Endothelial cell of umbilical vein (primary cell): ENCODE measurements at regions of chr3 and their contacts with region 1.

Region 1: GRCh38 chr3:185942907-185943759 is 5.3 kb upstream of the TRA2B start:
- DNase-seq: peak; percentile 66
- H3K4me3 ChIP-seq: no peak overlapping the region
- H3K27ac ChIP-seq: no peak overlapping the region
- H3K4me1 ChIP-seq: no peaks in the 10 kb centered on the region
- H3K27me3 ChIP-seq: peaks cover 6 to 13% of the 10 kb centered on the region in 2 experiments
- CTCF ChIP-seq: peak; percentile 97 to 99
- POLR2A ChIP-seq: no peak

Region 2: GRCh38 chr3:185585859-185586685 is 357.1 kb before region 1 on chr3 and contains the start of gene SENP2:
- CTCF ChIA-PET with region 1: interaction called, 11 read pairs
- POLR2A ChIA-PET with region 1: interaction called, 3 read pairs
- dilution Hi-C with region 1: no loop called
- intact Hi-C with region 1: no loop called
- DNase-seq: peak; percentile 100
- H3K4me3 ChIP-seq: peak within 1 kb of the TSS; percentile 36 to 93 (median 63)
- H3K27ac ChIP-seq: peak within 1 kb of the TSS; percentile 72
- H3K4me1 ChIP-seq: peaks cover 7% of the 10 kb centered on the region
- H3K27me3 ChIP-seq: peaks cover 0 to under 1% of the 10 kb centered on the region in 2 experiments
- CTCF ChIP-seq: no peak
- POLR2A ChIP-seq: peak; percentile 90
- total RNA-seq, gene SENP2: 38.9 and 40.4 TPM in 2 replicates

Region 3: DNA sequence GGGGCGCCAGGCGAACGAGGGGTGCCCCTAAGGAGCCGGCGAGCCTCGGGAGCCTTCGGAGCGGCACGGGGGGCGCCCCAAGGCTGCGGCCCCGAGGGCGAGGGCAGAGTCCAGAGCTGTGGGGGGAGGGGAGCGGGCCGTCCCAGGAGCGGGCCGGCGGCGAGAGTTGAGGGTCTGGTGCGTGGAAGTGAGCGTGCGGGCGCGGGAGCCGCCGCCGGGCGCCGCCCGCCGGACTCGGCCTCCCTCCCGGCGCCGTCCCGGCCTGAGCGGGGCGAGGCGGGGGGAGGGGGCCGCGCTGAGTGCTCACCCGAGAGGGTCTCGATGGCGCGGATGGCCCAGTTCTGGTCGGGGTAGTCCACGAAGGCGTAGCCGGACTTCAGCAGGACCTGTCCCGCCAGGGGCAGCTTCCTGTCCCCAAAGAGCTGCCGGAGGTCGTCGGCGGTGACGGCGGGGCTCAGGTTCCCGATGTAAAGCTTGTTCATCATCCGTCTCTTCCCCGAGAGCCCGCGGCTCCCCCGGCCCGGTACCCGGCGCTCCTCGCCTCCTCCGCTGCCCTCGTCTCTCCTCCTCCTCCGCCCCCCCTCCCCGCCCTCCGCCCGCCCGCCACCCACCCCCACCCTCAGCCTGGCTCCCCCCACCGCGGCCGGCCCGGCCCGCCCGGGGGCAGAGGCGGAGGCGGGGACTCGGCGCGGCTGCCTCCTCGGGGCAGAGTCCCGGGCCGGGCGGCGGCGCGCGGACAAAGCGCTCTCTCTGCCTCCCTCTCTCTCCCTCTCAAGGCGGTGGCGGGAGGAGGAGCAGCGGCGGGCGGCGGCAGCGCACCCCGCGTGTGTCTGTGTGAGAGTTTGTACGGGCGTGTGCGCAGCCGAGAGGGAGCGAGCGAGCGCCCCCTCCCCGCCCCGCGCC is 118.4 kb before region 1 on chr3 and contains the start of gene IGF2BP2:
- CTCF ChIA-PET with region 1: interaction called, 11 read pairs
- POLR2A ChIA-PET with region 1: interaction called, 6 read pairs
- dilution Hi-C with region 1: no loop called
- intact Hi-C with region 1: no loop called
- DNase-seq: peak; percentile 84
- H3K4me3 ChIP-seq: peak within 1 kb of the TSS; percentile 87 to 100 (median 98)
- H3K27ac ChIP-seq: peak within 1 kb of the TSS; percentile 84
- H3K4me1 ChIP-seq: peaks cover 32% of the 10 kb centered on the region
- H3K27me3 ChIP-seq: no peaks in the 10 kb centered on the region
- CTCF ChIP-seq: peak in 1 of 2 donors; percentile 11
- POLR2A ChIP-seq: peak; percentile 69
- total RNA-seq, gene IGF2BP2: 122 and 130 TPM in 2 replicates

Region 4: DNA sequence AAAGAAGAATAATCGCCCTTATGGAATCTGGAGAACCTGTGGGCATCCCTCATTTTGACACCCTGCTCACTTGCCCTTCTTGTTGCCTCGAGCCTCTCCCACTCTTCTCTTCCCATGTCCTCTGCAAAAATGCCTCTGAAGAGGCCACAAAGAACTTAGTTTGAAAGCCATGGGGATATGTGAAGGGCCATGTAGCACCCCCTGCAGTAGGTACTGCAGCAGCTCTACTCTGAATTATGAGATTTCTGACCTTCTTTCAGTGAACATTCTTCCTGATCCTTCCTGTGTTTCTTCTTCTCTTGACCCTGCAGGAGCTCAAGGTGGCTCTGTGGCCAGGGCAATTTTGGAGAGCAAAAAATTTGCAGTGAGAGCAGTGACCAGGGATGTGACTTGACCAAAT is 25.0 kb after region 1 on chr3:
- CTCF ChIA-PET with region 1: interaction called, 144 read pairs
- POLR2A ChIA-PET with region 1: interaction called, 3 read pairs
- dilution Hi-C with region 1: no loop called
- intact Hi-C with region 1: no loop called
- DNase-seq: no peak
- H3K4me3 ChIP-seq: no peak overlapping the region
- H3K27ac ChIP-seq: no peak overlapping the region
- H3K4me1 ChIP-seq: no peaks in the 10 kb centered on the region
- H3K27me3 ChIP-seq: no peaks in the 10 kb centered on the region
- CTCF ChIP-seq: no peak
- POLR2A ChIP-seq: no peak

Region 5: DNA sequence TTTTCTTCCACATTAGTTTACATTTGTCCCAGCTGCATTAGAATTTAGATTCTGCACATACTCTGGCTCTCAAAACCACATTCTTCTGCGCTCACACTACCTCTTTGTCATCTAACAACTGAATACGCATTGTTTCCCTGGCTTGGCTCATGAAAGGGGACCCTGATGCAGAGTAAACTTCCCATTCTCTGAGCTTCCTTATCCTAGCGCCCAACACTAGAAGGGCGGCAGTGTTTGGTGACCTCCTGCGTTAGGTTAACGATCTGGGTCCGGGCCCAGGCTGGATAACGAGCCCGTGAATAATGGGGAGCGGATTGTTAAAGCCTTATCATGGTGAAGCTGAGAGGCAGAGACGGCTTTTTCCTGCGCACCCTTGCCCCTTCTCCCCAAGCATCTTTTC is 101.8 kb after region 1 on chr3:
- CTCF ChIA-PET with region 1: interaction called, 10 read pairs
- POLR2A ChIA-PET with region 1: interaction called, 3 read pairs
- dilution Hi-C with region 1: no loop called
- intact Hi-C with region 1: no loop called
- DNase-seq: peak; percentile 99
- H3K4me3 ChIP-seq: no peak overlapping the region
- H3K27ac ChIP-seq: peak overlapping the region; percentile 28
- H3K4me1 ChIP-seq: peaks cover 10% of the 10 kb centered on the region
- H3K27me3 ChIP-seq: peaks cover 0 to 4% of the 10 kb centered on the region in 2 experiments
- CTCF ChIP-seq: no peak
- POLR2A ChIP-seq: no peak

Region 6: DNA sequence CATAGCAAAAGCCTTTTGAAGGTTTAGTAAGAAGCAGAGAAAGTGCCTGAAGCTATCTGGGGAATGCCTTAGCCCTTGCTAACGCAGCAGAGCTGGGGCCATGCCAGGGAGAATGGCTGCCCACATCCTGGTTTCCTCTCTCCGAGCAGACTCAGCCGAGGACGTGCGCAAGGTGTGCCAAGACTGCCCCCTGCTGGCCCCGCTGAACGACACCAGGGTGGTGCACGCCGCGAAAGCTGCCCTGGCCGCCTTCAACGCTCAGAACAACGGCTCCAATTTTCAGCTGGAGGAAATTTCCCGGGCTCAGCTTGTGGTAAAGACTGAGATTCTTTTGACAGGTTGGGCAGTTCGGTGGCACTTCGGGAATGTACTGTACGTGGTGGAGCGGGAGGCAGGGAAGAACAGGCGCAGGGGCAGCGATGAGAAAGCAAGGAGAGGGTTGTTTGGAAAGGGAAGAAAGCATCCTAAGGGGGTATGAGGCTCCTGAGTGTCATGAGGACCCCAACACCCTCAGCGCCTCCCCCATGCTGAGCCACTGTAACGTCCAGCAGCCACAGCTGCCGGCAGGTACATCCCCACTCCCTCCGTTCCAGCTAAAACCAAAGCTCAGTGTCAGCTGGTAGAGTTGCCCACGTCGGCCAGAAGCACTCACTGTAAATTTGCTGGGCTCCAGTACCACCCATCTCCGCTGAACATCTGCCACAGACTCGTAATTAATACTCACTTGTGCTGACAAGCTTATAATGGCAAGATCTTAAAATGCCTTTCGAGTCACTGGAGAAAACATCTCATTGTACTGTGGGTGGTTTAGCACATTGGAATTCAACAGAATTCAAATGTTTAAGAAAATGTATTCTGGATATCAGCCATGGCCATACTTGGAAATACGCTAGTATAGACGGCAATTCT is 674.2 kb after region 1 on chr3:
- CTCF ChIA-PET with region 1: interaction called, 17 read pairs
- POLR2A ChIA-PET with region 1: no interaction called
- dilution Hi-C with region 1: no loop called
- intact Hi-C with region 1: no loop called
- DNase-seq: peak; percentile 83
- H3K4me3 ChIP-seq: no peak overlapping the region
- H3K27ac ChIP-seq: no peak overlapping the region
- H3K4me1 ChIP-seq: peaks cover 5% of the 10 kb centered on the region
- H3K27me3 ChIP-seq: peaks cover 4 to 19% of the 10 kb centered on the region in 2 experiments
- CTCF ChIP-seq: peak; percentile 98
- POLR2A ChIP-seq: no peak